ENCODE measurements at regions of chr1 and their contacts with region 1.

Region 1: DNA sequence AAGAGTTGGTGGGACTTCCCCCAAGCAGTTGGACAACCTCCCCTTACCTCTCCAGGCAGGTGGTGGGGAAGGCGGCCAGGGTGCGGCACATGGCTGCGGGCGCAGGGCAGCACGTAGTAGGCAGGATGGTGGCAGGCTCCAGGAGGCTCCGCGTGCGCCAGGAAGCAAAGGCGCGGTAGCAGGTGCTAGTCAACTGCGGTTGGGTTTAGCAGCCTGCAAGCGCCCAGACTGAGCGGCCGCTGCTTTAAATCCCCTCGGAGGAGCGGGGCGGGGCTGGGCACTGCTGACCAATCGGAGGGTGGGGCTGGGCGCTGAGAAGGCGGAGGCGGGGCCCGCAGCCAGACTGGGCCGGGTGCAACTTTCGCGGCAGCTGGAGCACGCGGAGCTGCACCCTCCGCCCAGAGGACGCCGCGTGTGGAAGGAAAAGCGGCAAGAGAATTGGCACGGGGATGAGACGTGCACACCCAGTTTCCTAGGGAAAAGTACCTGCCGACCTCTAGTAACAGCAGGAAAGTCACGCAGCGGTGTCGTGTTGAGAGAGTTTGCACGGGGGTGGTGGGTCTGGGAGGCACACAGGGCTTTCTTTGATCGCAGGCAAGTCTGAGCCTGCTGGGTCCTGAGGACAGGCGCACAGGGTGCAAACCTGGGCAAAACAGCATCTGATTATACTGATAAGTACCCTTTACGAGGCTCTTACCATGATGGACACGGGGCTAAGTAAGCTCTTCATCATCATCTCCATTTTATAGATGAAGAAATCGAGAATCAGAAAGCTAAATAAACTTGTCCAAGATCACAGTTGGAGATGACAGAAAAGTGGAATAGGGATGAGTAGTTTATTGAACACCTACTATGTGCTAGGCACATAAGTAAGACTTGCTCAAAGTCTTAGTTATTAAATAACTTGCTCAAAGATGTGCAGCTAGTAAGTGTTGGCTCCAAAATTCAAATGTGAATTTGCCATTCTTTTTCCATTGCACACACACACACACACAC is at the start of gene RGS16:
- DNase-seq: peak; percentile 80 to 95
- H3K4me3 ChIP-seq: peak within 1 kb of the TSS; percentile 75 to 80
- H3K27ac ChIP-seq: peak within 1 kb of the TSS; percentile 41 to 71
- H3K4me1 ChIP-seq: peaks cover 10 to 26% of the 10 kb centered on the region in 2 donors
- H3K27me3 ChIP-seq: no peaks in the 10 kb centered on the region
- CTCF ChIP-seq: no peak
- total RNA-seq, gene RGS16: 8.1 TPM

Region 2: DNA sequence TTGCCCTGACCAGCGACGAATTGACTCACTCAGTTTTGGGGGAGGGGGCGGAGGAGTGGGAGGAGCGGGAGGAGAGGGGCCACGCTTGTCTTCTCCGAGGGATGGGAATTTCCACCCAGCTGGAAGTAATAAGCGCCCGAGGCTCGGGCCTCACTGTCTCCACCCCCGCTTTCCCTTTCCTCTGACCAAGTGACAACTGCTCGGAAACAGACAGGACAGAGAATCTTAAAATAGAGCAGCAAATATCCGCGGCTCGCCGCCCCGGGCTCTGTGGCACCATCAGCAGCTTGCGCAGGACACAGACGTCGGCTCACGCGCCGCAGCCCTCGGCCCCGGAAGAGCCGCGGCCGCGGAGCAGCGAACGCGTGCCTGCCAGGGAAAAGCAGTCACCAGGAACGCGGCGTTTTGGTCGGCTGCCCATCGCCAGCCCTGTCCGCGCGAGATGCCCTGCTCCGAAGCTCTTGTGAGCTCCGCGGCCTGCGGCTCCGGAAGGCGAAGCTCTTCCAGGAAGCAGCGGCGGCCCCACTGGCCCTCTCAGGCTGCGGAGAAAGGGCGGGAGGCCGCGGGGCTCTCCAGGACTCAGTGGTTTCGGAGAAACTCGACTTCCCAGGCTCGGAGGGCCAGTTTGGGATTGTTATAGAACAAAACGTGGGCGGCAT is 10.5 kb after region 1 on chr1:
- intact Hi-C with region 1: loop called (anchors 1 kb)
- DNase-seq: peak; percentile 73 to 93
- H3K4me3 ChIP-seq: peak overlapping the region; percentile 55 to 61
- H3K27ac ChIP-seq: peak overlapping the region; percentile 93 to 96
- H3K4me1 ChIP-seq: peaks cover 23 to 36% of the 10 kb centered on the region in 2 donors
- H3K27me3 ChIP-seq: no peaks in the 10 kb centered on the region
- CTCF ChIP-seq: no peak

Region 3: DNA sequence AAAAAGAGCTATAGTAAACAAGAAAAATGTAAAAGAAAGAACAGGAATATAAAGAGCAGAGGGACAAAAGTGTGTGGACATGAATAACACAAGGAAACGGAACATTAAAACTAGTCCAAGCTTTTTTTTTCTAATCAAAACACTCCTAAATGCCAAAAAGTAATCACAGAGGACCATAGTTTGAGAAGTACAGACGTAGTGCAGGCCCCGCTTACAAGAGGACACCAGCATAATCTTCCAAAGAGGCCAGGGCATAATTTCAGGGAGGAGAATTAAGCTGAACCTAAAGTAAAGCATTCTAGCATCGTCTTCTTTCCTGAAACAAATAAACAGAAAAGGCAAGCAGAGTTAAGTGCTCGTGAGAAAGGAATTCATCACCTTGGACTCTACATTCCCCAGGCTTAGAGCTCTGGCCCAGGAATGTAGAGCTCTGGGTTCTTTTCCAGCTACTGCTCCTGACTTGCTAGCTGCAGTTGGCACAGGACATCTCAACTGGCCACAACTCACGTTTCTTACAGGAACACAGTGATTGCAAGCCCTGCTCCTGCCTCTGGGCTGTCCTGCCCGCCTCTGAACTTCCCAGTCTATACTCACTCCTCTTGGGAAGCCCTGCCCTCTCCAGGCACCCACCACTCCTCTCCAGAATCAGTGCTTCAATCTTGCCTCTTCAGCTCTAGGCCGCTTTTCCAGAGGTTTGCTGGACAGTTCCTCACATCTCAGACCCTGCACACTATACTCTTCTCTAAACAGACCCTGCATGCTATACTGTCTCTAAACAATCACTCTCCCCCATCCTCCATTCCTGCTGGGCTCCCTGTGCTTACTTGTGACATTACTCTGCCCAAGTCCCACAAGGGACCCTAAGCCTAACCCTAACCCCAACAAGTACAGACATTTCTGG is 70.1 kb after region 1 on chr1:
- intact Hi-C with region 1: loop called (anchors 5 kb)
- DNase-seq: peak in 1 of 2 donors; percentile 84
- H3K4me3 ChIP-seq: peak overlapping the region in 1 of 2 donors; percentile 22
- H3K27ac ChIP-seq: peak overlapping the region; percentile 62 to 77
- H3K4me1 ChIP-seq: peaks cover 0 to 8% of the 10 kb centered on the region in 2 donors
- H3K27me3 ChIP-seq: no peaks in the 10 kb centered on the region
- CTCF ChIP-seq: no peak

Region 4: DNA sequence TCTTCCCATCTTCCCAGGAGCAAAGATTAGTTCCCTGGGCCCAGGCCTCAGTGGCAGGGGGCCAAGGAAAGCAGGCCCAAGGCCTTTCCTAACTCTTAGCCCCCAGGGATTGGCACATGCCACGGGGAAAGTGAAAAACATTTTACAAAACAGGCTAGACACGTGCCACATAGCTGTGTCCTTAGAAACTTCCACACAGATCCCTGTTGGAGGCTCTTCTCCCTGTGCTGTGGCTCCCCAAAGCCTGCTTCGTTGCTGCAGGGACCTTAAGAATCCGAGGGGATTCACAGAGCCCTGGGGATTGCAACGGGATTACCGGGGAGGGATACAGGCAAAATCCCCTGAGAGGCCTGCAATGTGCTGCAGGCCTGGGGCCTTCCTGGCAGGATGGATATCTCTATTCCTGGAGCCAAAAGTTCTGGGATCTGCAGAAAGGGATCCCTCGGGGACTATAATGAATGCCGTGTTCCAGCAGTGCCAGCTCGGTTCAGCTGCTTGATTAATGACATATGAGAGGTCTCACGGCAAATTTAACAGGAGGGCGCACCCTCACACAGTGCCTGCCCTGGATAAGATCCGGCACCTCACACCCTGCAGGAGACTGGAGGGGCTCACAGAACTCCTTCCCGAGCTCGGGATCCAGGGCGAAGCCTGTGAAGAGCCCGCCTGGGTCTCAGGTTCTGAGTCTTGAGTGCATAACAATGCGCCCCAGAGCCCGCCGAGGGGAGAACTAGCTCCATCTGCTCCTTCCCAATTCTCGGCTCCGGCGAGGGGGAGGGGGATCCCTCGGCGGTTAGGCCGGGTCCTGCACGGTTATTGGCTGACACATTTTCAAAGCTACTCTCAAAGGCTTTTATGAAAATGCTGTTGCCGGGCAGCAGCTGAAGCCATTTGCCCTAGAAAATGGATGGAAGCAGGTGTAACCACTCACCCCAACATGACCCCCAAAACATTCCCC is 95.2 kb after region 1 on chr1:
- intact Hi-C with region 1: loop called (anchors 5 kb)
- DNase-seq: peak in 1 of 2 donors; percentile 72
- H3K4me3 ChIP-seq: peak overlapping the region in 1 of 2 donors; percentile 28
- H3K27ac ChIP-seq: peak overlapping the region; percentile 6 to 16
- H3K4me1 ChIP-seq: peaks cover 6 to 35% of the 10 kb centered on the region in 2 donors
- H3K27me3 ChIP-seq: no peaks in the 10 kb centered on the region
- CTCF ChIP-seq: no peak

Region 5: DNA sequence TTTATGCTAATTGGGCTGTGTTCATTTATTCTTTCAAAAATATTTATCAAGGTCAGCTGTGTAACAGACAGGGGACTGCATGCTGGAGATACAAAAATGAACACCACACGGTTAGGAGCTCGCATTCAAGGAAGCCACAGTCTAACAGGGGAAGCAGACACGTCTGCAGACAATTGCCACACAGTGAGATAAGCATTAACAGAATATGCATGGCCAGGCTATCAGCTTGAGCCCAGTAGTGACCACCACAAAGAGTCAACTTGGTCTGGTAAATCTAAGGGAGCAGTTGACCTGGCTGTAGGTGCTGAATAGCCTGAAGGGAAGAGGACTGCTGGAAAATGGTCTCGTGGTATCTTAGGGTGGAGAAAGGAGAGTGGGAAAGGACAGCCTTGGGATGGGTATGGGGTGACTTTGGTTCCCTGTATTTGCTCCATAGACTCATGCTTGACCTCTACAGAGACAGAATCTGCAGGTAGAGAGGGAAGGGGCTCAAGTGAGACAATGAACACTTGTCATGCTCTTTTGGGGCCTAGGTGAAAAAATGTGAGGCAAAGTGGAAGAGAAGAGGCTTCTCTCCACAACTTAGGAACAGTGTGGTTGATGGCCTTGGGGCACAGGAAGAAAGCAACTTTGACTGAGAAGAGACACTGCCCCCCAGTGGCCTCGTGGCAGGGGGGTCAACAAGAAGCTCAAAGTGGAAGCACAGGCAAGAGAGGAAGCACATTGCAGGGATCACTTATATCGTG is 177.5 kb after region 1 on chr1:
- intact Hi-C with region 1: loop called (anchors 1 kb)
- DNase-seq: peak; percentile 14 to 84
- H3K4me3 ChIP-seq: no peak overlapping the region
- H3K27ac ChIP-seq: no peak overlapping the region
- H3K4me1 ChIP-seq: no peaks in the 10 kb centered on the region
- H3K27me3 ChIP-seq: no peaks in the 10 kb centered on the region
- CTCF ChIP-seq: peak; percentile 33 to 63 (median 55)

Measured in ascending aorta (tissue), 2 donors.